Ovary (tissue), 10 donors: ENCODE measurements at regions of chr1 and their contacts with region 1.

Region 1: DNA sequence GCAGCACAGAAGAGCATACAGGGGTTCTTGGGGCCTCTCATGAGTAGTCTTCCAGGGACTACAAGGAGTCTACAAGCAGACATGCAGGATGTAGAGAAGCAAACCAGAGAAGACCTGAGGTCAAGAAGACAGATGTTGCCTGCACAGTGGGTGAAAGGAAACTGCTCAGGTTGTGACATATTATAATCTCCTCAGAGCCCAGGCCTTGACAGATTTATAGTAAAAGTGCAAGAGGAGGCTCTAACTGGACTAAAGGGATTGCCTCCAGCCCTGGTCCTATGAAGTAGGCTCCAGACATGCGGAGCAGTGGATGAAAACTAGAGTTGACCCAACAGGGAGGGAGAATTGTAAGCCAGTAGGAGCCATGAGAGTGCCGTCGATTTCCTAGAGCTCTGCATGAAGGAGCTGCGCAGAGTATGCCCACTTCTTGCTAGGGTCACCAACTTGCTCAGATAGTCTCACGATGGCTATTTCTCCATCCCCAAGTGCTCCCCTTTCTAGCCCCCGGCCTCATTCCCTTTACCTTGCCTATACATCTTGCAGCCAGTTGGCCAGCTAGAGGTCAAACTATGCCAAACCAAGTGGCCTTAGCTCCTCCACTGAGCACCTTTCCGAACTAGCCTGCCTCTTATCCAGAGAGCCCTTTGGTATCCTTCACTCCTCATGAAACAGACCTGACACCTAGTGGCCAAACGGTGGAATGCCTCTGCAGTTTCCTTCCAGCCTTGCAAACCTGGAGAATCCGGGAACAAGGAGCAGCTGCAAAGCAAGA is 36.2 kb upstream of the IPO9 start:
- DNase-seq: peak; percentile 62 to 84 (median 77)
- H3K4me3 ChIP-seq: no peak overlapping the region
- H3K27ac ChIP-seq: peak overlapping the region in 1 of 2 donors; percentile 45
- H3K4me1 ChIP-seq: peaks cover 11% of the 10 kb centered on the region
- H3K27me3 ChIP-seq: no peaks in the 10 kb centered on the region
- CTCF ChIP-seq: peak; percentile 69 to 97 (median 96)
- EP300 ChIP-seq: no peak
- POLR2A ChIP-seq: no peak

Region 2: GRCh38 chr1:201530741-201531531 is 261.8 kb before region 1 on chr1:
- intact Hi-C with region 1: loop called in 2 of 4 experiments (anchors 5 to 10 kb)
- DNase-seq: peak; percentile 72 to 88 (median 83)
- H3K4me3 ChIP-seq: no peak overlapping the region
- H3K27ac ChIP-seq: no peak overlapping the region
- H3K4me1 ChIP-seq: no peaks in the 10 kb centered on the region
- H3K27me3 ChIP-seq: no peaks in the 10 kb centered on the region
- CTCF ChIP-seq: peak; percentile 46 to 70 (median 68)
- EP300 ChIP-seq: no peak
- POLR2A ChIP-seq: no peak

Region 3: GRCh38 chr1:201538612-201539551 is 253.8 kb before region 1 on chr1 and contains the start of gene NAV1:
- intact Hi-C with region 1: loop called in 2 of 4 experiments (anchors 5 to 10 kb)
- DNase-seq: peak; percentile 26 to 63 (median 55)
- H3K4me3 ChIP-seq: peak within 1 kb of the TSS; percentile 47
- H3K27ac ChIP-seq: peak within 1 kb of the TSS in 1 of 2 donors; percentile 63
- H3K4me1 ChIP-seq: peaks cover 5% of the 10 kb centered on the region
- H3K27me3 ChIP-seq: no peaks in the 10 kb centered on the region
- CTCF ChIP-seq: no peak
- EP300 ChIP-seq: no peak
- POLR2A ChIP-seq: peak; percentile 37
- total RNA-seq, gene NAV1: 6.2 to 19.6 (median 11.3) TPM

Region 4: DNA sequence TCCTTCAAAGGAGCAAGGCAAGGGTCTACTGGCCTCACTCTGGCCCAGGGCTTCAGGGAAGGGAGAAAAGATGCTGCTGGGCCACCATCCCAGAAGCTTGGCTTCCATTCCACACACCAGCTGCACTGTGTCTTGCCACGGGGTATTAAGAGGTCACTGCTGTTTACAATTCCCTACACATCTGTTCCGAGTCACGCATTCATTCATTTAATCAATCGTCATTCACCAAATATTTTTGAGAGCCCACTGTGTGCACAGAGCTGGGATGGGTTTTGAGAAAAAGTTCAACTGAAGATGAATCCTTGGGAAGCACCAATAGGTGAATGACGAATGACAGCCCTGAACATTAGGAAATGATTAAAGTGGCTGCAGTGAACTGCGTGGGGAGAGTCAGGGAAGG is 152.1 kb before region 1 on chr1:
- intact Hi-C with region 1: no loop called
- DNase-seq: peak; percentile 37 to 76 (median 66)
- H3K4me3 ChIP-seq: no peak overlapping the region
- H3K27ac ChIP-seq: no peak overlapping the region
- H3K4me1 ChIP-seq: peaks cover 7% of the 10 kb centered on the region
- H3K27me3 ChIP-seq: no peaks in the 10 kb centered on the region
- CTCF ChIP-seq: no peak
- EP300 ChIP-seq: no peak
- POLR2A ChIP-seq: no peak

Region 5: GRCh38 chr1:201709564-201710295 is 83.0 kb before region 1 on chr1:
- intact Hi-C with region 1: loop called (anchors 1 to 5 kb)
- DNase-seq: peak; percentile 53 to 84 (median 82)
- H3K4me3 ChIP-seq: no peak overlapping the region
- H3K27ac ChIP-seq: no peak overlapping the region
- H3K4me1 ChIP-seq: peaks cover 19% of the 10 kb centered on the region
- H3K27me3 ChIP-seq: no peaks in the 10 kb centered on the region
- CTCF ChIP-seq: peak; percentile 91 to 96 (median 93)
- EP300 ChIP-seq: no peak
- POLR2A ChIP-seq: no peak

Region 6: GRCh38 chr1:201838381-201838780 is 45.7 kb after region 1 on chr1:
- intact Hi-C with region 1: no loop called
- DNase-seq: no peak
- H3K4me3 ChIP-seq: no peak overlapping the region
- H3K27ac ChIP-seq: no peak overlapping the region
- H3K4me1 ChIP-seq: peaks cover 2% of the 10 kb centered on the region
- H3K27me3 ChIP-seq: no peaks in the 10 kb centered on the region
- CTCF ChIP-seq: no peak
- EP300 ChIP-seq: no peak
- POLR2A ChIP-seq: no peak